Gastrocnemius medialis (tissue), 4 donors: ENCODE measurements at regions of chrX and their contacts with region 1.

Region 1: GRCh38 chrX:15854712-15855567 is at the start of gene AP1S2:
- DNase-seq: peak; percentile 85 to 91
- ATAC-seq: peak; percentile 88
- H3K4me3 ChIP-seq: peak within 1 kb of the TSS; percentile 60 to 74 (median 68)
- H3K27ac ChIP-seq: peak within 1 kb of the TSS; percentile 87 to 94 (median 92)
- H3K4me1 ChIP-seq: peaks cover 15 to 26% of the 10 kb centered on the region in 2 donors
- H3K27me3 ChIP-seq: peaks cover 0 to 18% (median 0%) of the 10 kb centered on the region in 3 donors
- CTCF ChIP-seq: no peak
- POLR2A ChIP-seq: peak; percentile 75 to 82
- total RNA-seq, gene AP1S2: 79.8 to 155 (median 122) TPM

Region 2: GRCh38 chrX:15789979-15790768 is 64.8 kb before region 1 on chrX and contains the start of gene ZRSR2:
- in situ Hi-C with region 1: no loop called
- intact Hi-C with region 1: loop called (anchors 5 kb)
- DNase-seq: peak; percentile 52 to 72
- ATAC-seq: peak; percentile 89 to 95
- H3K4me3 ChIP-seq: peak within 1 kb of the TSS; percentile 71 to 78 (median 76)
- H3K27ac ChIP-seq: peak within 1 kb of the TSS; percentile 73 to 86 (median 82)
- H3K4me1 ChIP-seq: peaks cover 7 to 10% of the 10 kb centered on the region in 2 donors
- H3K27me3 ChIP-seq: no peaks in the 10 kb centered on the region
- CTCF ChIP-seq: no peak
- POLR2A ChIP-seq: peak; percentile 41 to 54
- total RNA-seq, gene ZRSR2: 3.9 to 8.4 (median 6.9) TPM

Region 3: GRCh38 chrX:15973299-15973698 is 118.4 kb after region 1 on chrX:
- in situ Hi-C with region 1: no loop called
- intact Hi-C with region 1: loop called (anchors 10 kb)
- DNase-seq: peak; percentile 4 to 18
- ATAC-seq: peak in 1 of 2 donors; percentile 76
- H3K4me3 ChIP-seq: no peak overlapping the region
- H3K27ac ChIP-seq: no peak overlapping the region
- H3K4me1 ChIP-seq: no peaks in the 10 kb centered on the region
- H3K27me3 ChIP-seq: no peaks in the 10 kb centered on the region
- CTCF ChIP-seq: peak; percentile 16 to 61 (median 43)
- POLR2A ChIP-seq: no peak

Region 4: GRCh38 chrX:15988661-15989603 is 134.0 kb after region 1 on chrX:
- in situ Hi-C with region 1: no loop called
- intact Hi-C with region 1: no loop called
- DNase-seq: no peak
- ATAC-seq: peak in 1 of 2 donors; percentile 68
- H3K4me3 ChIP-seq: peak overlapping the region in 1 of 4 donors; percentile 17
- H3K27ac ChIP-seq: peak overlapping the region; percentile 1 to 63 (median 48)
- H3K4me1 ChIP-seq: no peaks in the 10 kb centered on the region
- H3K27me3 ChIP-seq: peaks cover 0 to 5% (median 0%) of the 10 kb centered on the region in 3 donors
- CTCF ChIP-seq: no peak
- POLR2A ChIP-seq: no peak

Region 5: DNA sequence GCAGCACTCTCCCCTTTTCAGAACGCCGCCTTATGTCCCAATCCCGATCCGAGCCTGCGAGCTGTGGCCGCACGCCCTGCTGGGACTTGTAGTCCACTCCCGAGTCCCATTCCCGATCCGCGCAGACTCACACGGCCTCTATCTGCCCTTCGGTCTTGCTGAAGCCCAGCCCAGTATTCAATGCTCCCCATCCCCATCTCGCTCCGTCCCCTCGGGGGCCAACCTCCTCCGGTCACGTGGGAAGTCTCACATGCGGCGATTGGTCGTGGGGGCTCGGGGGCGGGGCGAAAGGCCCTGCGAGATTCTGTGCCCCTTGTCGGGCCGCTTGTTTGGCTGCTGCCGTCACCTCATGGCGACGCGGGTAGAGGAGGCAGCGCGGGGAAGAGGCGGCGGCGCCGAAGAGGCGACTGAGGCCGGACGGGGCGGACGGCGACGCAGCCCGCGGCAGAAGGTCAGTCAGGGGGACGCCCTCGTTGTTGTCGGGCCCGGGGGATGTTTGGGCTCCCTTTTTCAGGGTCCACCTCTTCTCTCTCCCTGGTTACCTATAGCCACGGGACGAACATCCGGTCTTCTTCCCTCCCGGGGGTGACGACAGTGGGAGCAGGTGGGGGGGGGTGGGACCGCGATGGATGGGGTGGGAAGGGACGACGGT is 931.3 kb after region 1 on chrX and contains the start of gene TXLNG:
- in situ Hi-C with region 1: no loop called
- intact Hi-C with region 1: loop called (anchors 5 kb)
- DNase-seq: peak; percentile 97 to 98
- ATAC-seq: peak; percentile 97 to 99
- H3K4me3 ChIP-seq: peak within 1 kb of the TSS; percentile 68 to 84 (median 74)
- H3K27ac ChIP-seq: peak within 1 kb of the TSS; percentile 91 to 93 (median 92)
- H3K4me1 ChIP-seq: peaks cover 3 to 7% of the 10 kb centered on the region in 2 donors
- H3K27me3 ChIP-seq: no peaks in the 10 kb centered on the region
- CTCF ChIP-seq: no peak
- POLR2A ChIP-seq: peak; percentile 87 to 92
- total RNA-seq, gene TXLNG: 6.9 to 16.9 (median 9.6) TPM